ENCODE measurements at regions of chrX and their contacts with region 1.

Region 1: GRCh38 chrX:65581661-65582339 is 47.2 kb upstream of the LAS1L start:
- DNase-seq: peak; percentile 69
- H3K4me3 ChIP-seq: no peak overlapping the region
- H3K27ac ChIP-seq: no peak overlapping the region
- H3K4me1 ChIP-seq: no peaks in the 10 kb centered on the region
- H3K27me3 ChIP-seq: no peaks in the 10 kb centered on the region

Region 2: DNA sequence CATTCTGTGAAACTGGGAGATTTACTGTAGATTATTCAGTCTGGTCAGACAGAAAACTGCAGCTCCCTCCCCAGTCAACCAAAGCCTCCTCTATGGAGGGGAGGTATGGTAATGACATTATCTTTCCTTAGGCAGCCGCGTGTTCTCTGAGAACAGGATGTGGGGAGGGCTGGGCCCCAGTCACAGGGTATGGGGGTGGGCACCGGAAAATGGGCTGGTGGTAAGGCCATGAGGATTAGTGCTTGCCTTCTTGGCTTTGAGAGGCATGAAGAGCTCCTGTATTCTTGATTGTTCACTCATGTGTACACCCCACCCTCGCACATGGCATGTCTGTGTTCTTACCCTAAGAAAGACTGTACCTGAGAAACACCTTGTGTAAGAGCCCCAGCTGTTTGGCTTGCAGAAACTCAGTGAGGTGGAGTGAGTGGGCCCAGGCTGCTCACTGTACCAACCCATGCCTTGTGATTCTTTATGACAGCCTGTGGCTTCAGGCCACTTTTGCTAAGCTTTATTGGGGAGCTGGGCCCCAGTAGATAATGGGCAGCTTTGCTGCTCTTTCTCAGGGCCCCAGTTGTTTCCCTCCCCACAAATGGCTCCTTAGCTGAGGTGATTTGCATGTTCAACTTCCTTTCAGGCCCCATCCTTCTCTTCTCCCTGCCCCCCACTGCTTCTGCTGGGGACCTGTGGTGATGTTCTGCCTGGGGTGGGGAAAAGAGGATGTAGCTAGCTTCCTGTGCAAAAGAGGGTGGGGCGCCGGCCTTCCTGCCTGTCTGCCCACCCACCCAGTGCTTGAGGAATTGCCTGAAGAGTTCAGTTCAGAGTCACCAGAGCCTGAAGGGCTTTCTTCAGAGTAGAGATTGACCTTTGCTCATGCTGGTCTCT is 116.4 kb after region 1 on chrX:
- in situ Hi-C with region 1: no loop called
- DNase-seq: peak; percentile 40
- H3K4me3 ChIP-seq: no peak overlapping the region
- H3K27ac ChIP-seq: peak overlapping the region; percentile 89
- H3K4me1 ChIP-seq: peaks cover 57% of the 10 kb centered on the region
- H3K27me3 ChIP-seq: no peaks in the 10 kb centered on the region

Region 3: DNA sequence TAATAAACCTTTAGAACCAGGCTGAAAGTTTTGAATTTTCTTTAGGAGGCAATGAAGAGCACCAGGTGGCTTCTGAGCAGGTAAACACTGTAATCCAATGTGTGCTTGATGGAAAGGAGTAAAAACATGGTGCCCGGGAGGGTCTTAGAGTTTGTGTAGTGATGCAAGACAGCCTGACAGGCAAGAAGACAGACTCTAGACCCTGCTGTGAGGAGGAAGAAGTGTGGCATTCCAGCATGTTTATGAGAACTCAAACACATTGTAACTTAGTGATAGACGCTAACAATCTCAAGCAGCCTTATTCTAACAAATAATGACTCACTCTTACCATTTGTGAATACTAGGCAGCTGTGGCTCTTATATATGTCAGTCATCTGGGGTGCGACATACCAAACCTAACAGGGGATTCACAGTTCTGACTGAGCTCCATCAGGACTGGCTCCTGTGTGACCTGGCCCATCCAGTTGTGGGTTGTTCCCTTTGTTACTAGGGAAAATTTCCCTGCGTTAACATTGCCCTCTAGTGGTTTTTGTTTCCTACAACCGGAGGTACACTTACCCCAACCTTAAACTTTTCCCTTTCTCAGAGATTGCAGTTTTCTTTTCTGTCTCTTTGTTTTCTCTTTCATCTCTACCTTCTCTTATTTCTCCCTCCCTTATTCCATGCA is 404.3 kb after region 1 on chrX:
- in situ Hi-C with region 1: loop called (anchors 10 kb)
- DNase-seq: peak; percentile 67
- H3K4me3 ChIP-seq: no peak overlapping the region
- H3K27ac ChIP-seq: no peak overlapping the region
- H3K4me1 ChIP-seq: no peaks in the 10 kb centered on the region
- H3K27me3 ChIP-seq: no peaks in the 10 kb centered on the region